Activated CD4-positive, alpha-beta memory T cell treated with anti-CD3 and anti-CD28 coated beads, Interleukin-2, amount 10 ng/mL, durations not matched to agents 7 days and 5 days (primary cell): ENCODE measurements at regions of chr20 and their contacts with region 1.

Region 1: DNA sequence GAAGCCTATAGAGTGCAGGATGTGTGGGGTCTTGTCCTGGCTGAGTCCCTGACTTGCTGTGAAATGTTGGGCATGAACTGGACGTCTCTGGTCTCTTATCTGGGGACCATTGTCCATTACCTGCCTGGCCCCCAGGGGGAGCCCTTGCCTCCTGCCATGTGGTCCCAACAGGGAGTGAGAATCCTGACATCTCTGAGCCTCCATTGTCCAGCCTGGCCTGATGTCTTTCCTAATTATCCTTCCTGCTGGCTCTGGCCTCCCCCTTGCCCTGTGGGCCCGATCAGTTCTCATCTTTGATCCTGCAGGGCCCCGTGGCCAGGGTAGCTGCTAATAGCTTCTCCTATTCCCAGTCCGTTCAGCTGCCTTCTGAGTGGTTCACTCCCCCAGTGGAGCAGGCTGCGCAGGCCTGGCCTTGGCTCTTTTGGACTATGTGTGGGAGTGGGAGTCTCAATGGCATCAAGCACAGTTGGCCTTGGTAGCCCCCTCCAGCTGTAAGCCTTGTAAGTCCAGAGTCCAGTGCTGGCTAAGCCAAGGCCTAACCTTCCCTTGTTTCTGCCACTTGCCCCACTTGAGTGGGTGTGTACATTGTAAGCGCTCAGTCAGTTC is 77.9 kb upstream of the RALY start:
- DNase-seq: peak; percentile 59
- H3K4me3 Mint-ChIP-seq: no peak overlapping the region
- H3K27ac Mint-ChIP-seq: no peak overlapping the region
- H3K4me1 Mint-ChIP-seq: peaks cover 27% of the 10 kb centered on the region
- H3K27me3 Mint-ChIP-seq: peaks cover 12% of the 10 kb centered on the region

Region 2: GRCh38 chr20:33791959-33792597 is 123.8 kb before region 1 on chr20:
- CTCF ChIA-PET with region 1: interaction called, 15 read pairs
- POLR2A ChIA-PET with region 1: interaction called, 4 read pairs
- DNase-seq: peak; percentile 55
- H3K4me3 Mint-ChIP-seq: no peak overlapping the region
- H3K27ac Mint-ChIP-seq: no peak overlapping the region
- H3K4me1 Mint-ChIP-seq: peaks cover 32% of the 10 kb centered on the region
- H3K27me3 Mint-ChIP-seq: no peaks in the 10 kb centered on the region

Region 3: GRCh38 chr20:33862709-33863403 is 53.0 kb before region 1 on chr20:
- CTCF ChIA-PET with region 1: interaction called, 17 read pairs
- POLR2A ChIA-PET with region 1: no interaction called
- DNase-seq: peak; percentile 58
- H3K4me3 Mint-ChIP-seq: no peak overlapping the region
- H3K27ac Mint-ChIP-seq: no peak overlapping the region
- H3K4me1 Mint-ChIP-seq: peaks cover 28% of the 10 kb centered on the region
- H3K27me3 Mint-ChIP-seq: no peaks in the 10 kb centered on the region

Region 4: GRCh38 chr20:33944914-33945313 is 29.1 kb after region 1 on chr20:
- CTCF ChIA-PET with region 1: interaction called, 10 read pairs
- POLR2A ChIA-PET with region 1: no interaction called
- DNase-seq: no peak
- H3K4me3 Mint-ChIP-seq: no peak overlapping the region
- H3K27ac Mint-ChIP-seq: no peak overlapping the region
- H3K4me1 Mint-ChIP-seq: no peaks in the 10 kb centered on the region
- H3K27me3 Mint-ChIP-seq: peaks cover 1% of the 10 kb centered on the region

Region 5: DNA sequence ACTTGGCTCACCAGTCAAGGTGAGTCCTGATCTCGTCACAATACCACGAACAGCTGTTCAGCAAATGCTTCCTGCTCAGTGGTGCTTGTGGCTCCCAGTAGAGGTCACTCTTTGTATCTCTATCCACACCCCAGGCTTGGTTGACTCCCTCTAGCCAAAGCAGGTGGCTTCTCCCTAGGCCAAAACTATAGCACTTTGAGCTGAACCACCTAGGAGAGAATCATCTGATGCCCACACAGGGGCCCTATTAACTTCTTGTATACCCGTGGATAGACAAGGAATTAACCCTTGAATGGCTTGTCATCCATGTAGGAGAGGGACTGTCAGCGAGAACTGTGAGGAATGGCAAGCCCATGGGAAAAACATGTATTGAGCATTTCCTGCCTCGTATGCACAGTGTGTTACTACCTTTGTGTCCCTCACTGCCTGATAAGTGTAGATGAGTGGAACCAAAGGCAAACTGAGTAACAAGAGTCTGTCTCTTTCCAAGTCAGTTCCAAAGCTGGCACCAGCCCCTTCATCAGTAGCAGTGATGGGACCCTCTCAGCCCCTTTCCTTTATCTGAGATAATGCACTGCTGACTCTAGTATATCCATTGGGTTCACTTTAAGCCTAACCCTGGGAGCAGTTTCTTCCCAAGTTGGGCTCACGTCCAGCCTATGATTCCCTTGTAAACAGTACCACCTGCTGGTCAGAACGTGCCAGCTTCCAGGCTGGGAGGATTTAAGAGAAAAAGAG is 153.7 kb after region 1 on chr20:
- CTCF ChIA-PET with region 1: interaction called, 23 read pairs
- POLR2A ChIA-PET with region 1: no interaction called
- DNase-seq: peak; percentile 62
- H3K4me3 Mint-ChIP-seq: no peak overlapping the region
- H3K27ac Mint-ChIP-seq: no peak overlapping the region
- H3K4me1 Mint-ChIP-seq: peaks cover 20% of the 10 kb centered on the region
- H3K27me3 Mint-ChIP-seq: no peaks in the 10 kb centered on the region